ENCODE measurements at regions of chr11 and their contacts with region 1.

Region 1: GRCh38 chr11:12888525-12889158 is 120.5 kb upstream of the RASSF10 start:
- DNase-seq: peak; percentile 89
- H3K4me3 ChIP-seq: no peak overlapping the region
- H3K27ac ChIP-seq: peak overlapping the region; percentile 67 to 77 (median 74)
- H3K4me1 ChIP-seq: peaks cover 0 to 20% (median 9%) of the 10 kb centered on the region in 4 donors
- H3K27me3 ChIP-seq: no peaks in the 10 kb centered on the region
- CTCF ChIP-seq: peak; percentile 62 to 85 (median 68)
- EP300 ChIP-seq: no peak
- POLR2A ChIP-seq: no peak

Region 2: GRCh38 chr11:12331239-12331874 is 557.3 kb before region 1 on chr11:
- in situ Hi-C with region 1: loop called (anchors 5 to 25 kb)
- intact Hi-C with region 1: loop called (anchors 5 kb)
- DNase-seq: peak; percentile 85
- H3K4me3 ChIP-seq: no peak overlapping the region
- H3K27ac ChIP-seq: peak overlapping the region; percentile 42 to 76 (median 67)
- H3K4me1 ChIP-seq: peaks cover 2 to 12% (median 4%) of the 10 kb centered on the region in 4 donors
- H3K27me3 ChIP-seq: no peaks in the 10 kb centered on the region
- CTCF ChIP-seq: peak; percentile 66 to 90 (median 74)
- EP300 ChIP-seq: no peak
- POLR2A ChIP-seq: no peak

Region 3: GRCh38 chr11:12673924-12674570 is 214.6 kb before region 1 on chr11 and contains the start of gene TEAD1:
- in situ Hi-C with region 1: loop called (anchors 10 to 25 kb)
- intact Hi-C with region 1: loop called (anchors 5 kb)
- DNase-seq: peak; percentile 97
- H3K4me3 ChIP-seq: peak within 1 kb of the TSS; percentile 63 to 97 (median 77)
- H3K27ac ChIP-seq: peak within 1 kb of the TSS; percentile 96 to 100 (median 98)
- H3K4me1 ChIP-seq: peaks cover 1 to 35% (median 28%) of the 10 kb centered on the region in 4 donors
- H3K27me3 ChIP-seq: no peaks in the 10 kb centered on the region
- CTCF ChIP-seq: no peak
- EP300 ChIP-seq: peak; percentile 58
- POLR2A ChIP-seq: peak; percentile 68
- total RNA-seq, gene TEAD1: 46.4 to 214 (median 61.2) TPM

Region 4: GRCh38 chr11:12687740-12688139 is 200.9 kb before region 1 on chr11:
- in situ Hi-C with region 1: loop called in 2 of 4 experiments (anchors 25 kb)
- intact Hi-C with region 1: loop called (anchors 5 kb)
- DNase-seq: no peak
- H3K4me3 ChIP-seq: no peak overlapping the region
- H3K27ac ChIP-seq: no peak overlapping the region
- H3K4me1 ChIP-seq: peaks cover 39 to 82% (median 45%) of the 10 kb centered on the region in 4 donors
- H3K27me3 ChIP-seq: no peaks in the 10 kb centered on the region
- CTCF ChIP-seq: no peak
- EP300 ChIP-seq: no peak
- POLR2A ChIP-seq: no peak

Region 5: DNA sequence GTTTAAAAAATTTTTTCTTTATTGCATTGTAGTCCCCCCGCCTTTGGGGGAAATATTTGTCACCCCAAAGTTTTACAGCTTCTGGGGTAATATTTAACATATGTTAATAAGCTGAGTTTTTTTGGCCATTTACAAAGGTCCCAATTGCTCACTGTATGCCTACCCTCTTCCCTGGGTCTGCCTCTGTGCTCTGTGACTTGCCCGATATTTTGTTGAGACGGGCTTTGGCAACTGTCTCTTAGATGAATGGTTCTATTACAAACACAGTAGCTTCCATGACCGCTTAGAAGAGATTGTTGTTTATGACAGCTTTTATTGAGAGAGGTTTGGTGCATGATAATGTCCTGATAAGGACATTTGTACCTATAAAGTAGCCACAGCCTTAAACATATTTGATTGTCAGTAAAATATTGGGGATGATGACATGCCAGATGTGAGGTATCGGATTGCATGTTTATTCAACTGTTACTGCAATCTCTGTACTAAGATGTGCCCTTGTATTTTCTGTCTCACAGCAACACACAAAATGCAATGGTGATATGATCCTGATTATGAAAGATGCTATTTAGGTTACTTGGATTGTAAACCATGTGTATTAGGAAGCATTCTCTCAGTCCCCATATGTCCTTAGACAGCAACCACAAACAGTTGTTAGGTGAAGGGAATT is 111.3 kb before region 1 on chr11:
- in situ Hi-C with region 1: no loop called
- intact Hi-C with region 1: no loop called
- DNase-seq: no peak
- H3K4me3 ChIP-seq: no peak overlapping the region
- H3K27ac ChIP-seq: peak overlapping the region in 3 of 4 donors; percentile 23 to 53 (median 39)
- H3K4me1 ChIP-seq: peaks cover 0 to 16% (median 4%) of the 10 kb centered on the region in 4 donors
- H3K27me3 ChIP-seq: no peaks in the 10 kb centered on the region
- CTCF ChIP-seq: no peak
- EP300 ChIP-seq: no peak
- POLR2A ChIP-seq: no peak

Region 6: GRCh38 chr11:12832825-12833224 is 55.8 kb before region 1 on chr11:
- in situ Hi-C with region 1: loop called in 1 of 4 experiments (anchors 5 kb)
- intact Hi-C with region 1: no loop called
- DNase-seq: no peak
- H3K4me3 ChIP-seq: no peak overlapping the region
- H3K27ac ChIP-seq: no peak overlapping the region
- H3K4me1 ChIP-seq: peaks cover 7 to 28% (median 15%) of the 10 kb centered on the region in 4 donors
- H3K27me3 ChIP-seq: no peaks in the 10 kb centered on the region
- CTCF ChIP-seq: no peak
- EP300 ChIP-seq: no peak
- POLR2A ChIP-seq: no peak